ENCODE measurements at regions of chr4 and their contacts with region 1.

Region 1: GRCh38 chr4:102598086-102598761 is 97.1 kb downstream of the NFKB1 start:
- DNase-seq: no peak
- H3K4me3 Mint-ChIP-seq: peak overlapping the region; percentile 43
- H3K27ac Mint-ChIP-seq: peak overlapping the region; percentile 92
- H3K4me1 Mint-ChIP-seq: peaks cover 73% of the 10 kb centered on the region
- H3K27me3 Mint-ChIP-seq: no peaks in the 10 kb centered on the region

Region 2: DNA sequence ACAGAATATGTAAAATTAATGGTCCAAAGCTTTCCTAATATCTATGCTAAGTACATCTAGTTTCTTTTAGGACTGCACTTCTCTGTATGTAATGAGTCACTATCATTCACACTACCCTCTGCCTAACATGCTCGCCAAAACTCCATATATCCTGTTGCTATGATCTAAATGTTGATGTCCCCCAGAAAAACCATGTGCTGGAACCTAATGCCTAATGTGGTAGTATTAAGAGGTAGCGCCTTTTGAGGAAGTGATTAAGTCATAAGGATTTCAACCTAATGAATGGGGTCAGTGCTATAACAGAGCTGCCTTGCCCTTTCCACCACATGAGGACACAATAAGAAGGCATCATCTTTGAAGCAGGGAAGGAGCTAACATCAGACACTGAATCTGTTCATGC is 131.9 kb before region 1 on chr4:
- CTCF ChIA-PET with region 1: no interaction called
- POLR2A ChIA-PET with region 1: no interaction called
- DNase-seq: no peak
- H3K4me3 Mint-ChIP-seq: no peak overlapping the region
- H3K27ac Mint-ChIP-seq: no peak overlapping the region
- H3K4me1 Mint-ChIP-seq: peaks cover 24% of the 10 kb centered on the region
- H3K27me3 Mint-ChIP-seq: peaks cover 4% of the 10 kb centered on the region

Region 3: DNA sequence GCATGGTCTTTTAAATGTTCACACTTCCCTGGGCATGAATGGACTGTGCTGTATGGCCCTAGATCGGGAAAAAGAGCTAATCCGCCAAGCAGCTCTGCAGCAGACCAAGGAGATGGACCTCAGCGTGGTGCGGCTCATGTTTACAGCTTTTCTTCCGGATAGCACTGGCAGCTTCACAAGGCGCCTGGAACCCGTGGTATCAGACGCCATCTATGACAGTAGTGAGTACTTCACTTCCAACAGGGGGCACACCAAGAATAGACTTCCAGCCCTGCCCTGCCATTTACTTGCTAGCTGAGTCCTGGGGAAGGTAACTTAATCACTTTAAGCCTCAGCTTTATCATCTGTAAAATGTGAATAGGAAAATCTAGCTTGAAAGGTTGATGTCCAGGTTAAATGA is 19.4 kb before region 1 on chr4:
- CTCF ChIA-PET with region 1: interaction called, 3 read pairs
- POLR2A ChIA-PET with region 1: interaction called, 12 read pairs
- DNase-seq: no peak
- H3K4me3 Mint-ChIP-seq: no peak overlapping the region
- H3K27ac Mint-ChIP-seq: no peak overlapping the region
- H3K4me1 Mint-ChIP-seq: peaks cover 74% of the 10 kb centered on the region
- H3K27me3 Mint-ChIP-seq: no peaks in the 10 kb centered on the region

Region 4: GRCh38 chr4:102586644-102587021 is 11.6 kb before region 1 on chr4:
- CTCF ChIA-PET with region 1: interaction called, 4 read pairs
- POLR2A ChIA-PET with region 1: interaction called, 29 read pairs
- DNase-seq: peak; percentile 70
- H3K4me3 Mint-ChIP-seq: peak overlapping the region; percentile 50
- H3K27ac Mint-ChIP-seq: peak overlapping the region; percentile 81
- H3K4me1 Mint-ChIP-seq: peaks cover 87% of the 10 kb centered on the region
- H3K27me3 Mint-ChIP-seq: no peaks in the 10 kb centered on the region

Region 5: GRCh38 chr4:103036169-103036568 is 437.9 kb after region 1 on chr4:
- CTCF ChIA-PET with region 1: no interaction called
- POLR2A ChIA-PET with region 1: no interaction called
- DNase-seq: no peak
- H3K4me3 Mint-ChIP-seq: no peak overlapping the region
- H3K27ac Mint-ChIP-seq: no peak overlapping the region
- H3K4me1 Mint-ChIP-seq: peaks cover 16% of the 10 kb centered on the region
- H3K27me3 Mint-ChIP-seq: no peaks in the 10 kb centered on the region

Measured in activated CD4-positive, alpha-beta memory T cell treated with anti-CD3 and anti-CD28 coated beads, Interleukin-2, amount 10 ng/mL, durations not matched to agents 7 days and 5 days (primary cell).